ENCODE measurements at regions of chr6 and their contacts with region 1.

Region 1: DNA sequence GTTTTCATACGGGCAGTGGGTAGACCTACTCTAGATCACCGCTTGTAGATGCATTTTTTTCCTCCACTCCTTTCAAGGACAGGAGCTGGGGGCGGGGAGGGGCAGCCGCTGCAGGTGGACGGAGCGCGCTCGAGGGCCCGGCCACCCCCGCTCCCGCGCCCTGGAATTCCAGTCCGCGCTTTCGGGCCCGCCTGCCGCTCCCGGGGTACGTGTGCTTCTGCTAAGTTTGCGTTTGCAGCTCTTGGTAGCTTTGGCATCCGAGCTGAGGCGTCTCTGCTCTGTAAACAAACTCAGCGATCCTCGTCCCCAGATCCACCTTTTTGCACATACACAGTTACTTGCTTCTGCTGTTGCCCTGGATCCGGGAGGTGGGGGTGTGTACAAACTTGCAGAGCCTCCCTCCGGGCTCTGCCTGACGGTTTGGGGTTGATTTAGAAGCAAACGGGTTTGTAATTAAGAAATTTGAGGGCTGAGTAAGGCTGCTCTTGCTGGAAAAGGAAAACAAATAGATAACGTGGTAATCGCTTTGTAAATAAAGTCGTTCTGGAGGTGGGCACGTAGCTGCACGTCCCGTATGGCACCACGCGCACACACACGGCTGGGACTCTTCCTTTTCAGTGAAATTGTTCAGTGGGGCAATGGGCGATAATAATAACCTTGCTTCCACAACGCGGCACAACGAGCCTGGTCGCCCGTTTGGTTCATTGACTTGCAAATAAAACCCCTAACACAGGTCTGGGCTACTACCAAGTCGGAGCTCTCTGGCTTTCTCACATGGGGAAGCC is 976 bp upstream of the CITED2 start:
- DNase-seq: peak; percentile 80
- H3K4me3 Mint-ChIP-seq: peak overlapping the region; percentile 96
- H3K27ac Mint-ChIP-seq: peak overlapping the region; percentile 93
- H3K4me1 Mint-ChIP-seq: peaks cover 31% of the 10 kb centered on the region
- H3K27me3 Mint-ChIP-seq: no peaks in the 10 kb centered on the region

Region 2: DNA sequence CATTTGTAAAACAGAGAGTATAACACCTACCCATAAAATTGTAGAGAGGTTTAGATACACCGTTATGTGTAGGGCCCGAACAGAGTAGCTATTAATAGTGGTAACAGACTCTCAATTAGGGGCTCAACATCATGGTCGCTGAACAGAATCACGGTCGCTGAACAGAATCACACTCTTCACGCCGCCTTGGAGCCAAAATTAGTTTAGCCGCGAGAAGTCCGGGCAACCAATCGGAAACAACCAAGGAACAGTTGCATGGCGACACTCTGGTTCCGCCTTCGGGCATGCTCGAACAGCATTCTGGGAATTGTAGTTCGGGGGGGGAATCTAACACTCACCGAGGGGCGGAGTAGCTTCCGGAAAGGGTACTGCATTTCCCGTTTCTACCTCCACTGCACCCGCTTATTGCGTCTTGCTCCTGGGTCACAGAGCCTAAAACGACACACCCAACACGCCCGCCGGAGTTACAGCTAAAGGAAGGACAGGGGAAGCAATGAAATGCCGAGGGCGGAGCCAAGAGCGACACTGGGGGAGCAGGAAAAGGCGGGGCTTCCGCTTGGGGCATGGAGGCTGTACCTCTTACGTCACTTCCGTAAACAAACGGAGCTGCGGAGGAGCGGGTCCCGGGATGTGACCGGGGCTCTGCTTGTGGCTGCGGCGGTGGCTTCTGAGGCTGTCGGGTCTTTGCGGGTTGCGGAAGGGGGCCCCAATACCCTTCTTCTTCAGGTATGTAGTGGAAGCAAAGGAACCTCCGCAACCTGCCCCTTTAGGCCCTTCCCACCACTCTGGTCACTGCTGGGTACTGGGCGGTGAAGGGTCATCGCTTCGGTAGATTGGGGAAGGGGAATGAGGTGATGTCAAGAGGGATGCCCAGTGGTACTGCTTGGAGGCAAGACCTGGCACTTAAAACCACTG is 602.0 kb before region 1 on chr6 and contains the start of gene CCDC28A:
- CTCF ChIA-PET with region 1: no interaction called
- intact Hi-C with region 1: loop called (anchors 1 kb)
- DNase-seq: peak; percentile 97
- H3K4me3 Mint-ChIP-seq: peak within 1 kb of the TSS; percentile 98
- H3K27ac Mint-ChIP-seq: peak within 1 kb of the TSS; percentile 100
- H3K4me1 Mint-ChIP-seq: peaks cover 30% of the 10 kb centered on the region
- H3K27me3 Mint-ChIP-seq: no peaks in the 10 kb centered on the region
- total RNA-seq, gene CCDC28A: 18.9 to 19.2 TPM

Region 3: DNA sequence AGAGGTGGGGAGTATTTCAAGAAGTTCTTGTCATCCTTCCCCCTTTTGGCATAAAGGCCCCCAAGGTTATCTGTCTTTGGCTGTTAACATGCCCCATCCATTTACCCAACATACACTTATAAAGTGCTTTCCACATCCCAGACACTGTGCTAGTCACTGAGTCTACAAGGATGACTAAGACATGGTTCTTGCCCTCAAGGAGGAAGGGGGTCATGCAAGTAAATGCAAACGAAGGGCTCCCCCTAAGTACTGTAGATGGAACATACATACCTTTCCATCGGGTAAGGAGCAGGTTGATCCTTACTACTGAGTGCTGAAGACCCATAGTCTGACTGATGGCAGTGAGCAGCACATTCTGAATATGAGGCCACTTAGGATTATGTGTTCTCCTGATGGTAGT is 202.3 kb before region 1 on chr6:
- CTCF ChIA-PET with region 1: no interaction called
- intact Hi-C with region 1: loop called (anchors 1 kb)
- DNase-seq: peak; percentile 46
- H3K4me3 Mint-ChIP-seq: no peak overlapping the region
- H3K27ac Mint-ChIP-seq: peak overlapping the region; percentile 85
- H3K4me1 Mint-ChIP-seq: peaks cover 88% of the 10 kb centered on the region
- H3K27me3 Mint-ChIP-seq: no peaks in the 10 kb centered on the region

Region 4: GRCh38 chr6:139600919-139601475 is 225.6 kb after region 1 on chr6:
- CTCF ChIA-PET with region 1: interaction called, 3 read pairs
- intact Hi-C with region 1: loop called (anchors 2 kb)
- DNase-seq: peak; percentile 23
- H3K4me3 Mint-ChIP-seq: no peak overlapping the region
- H3K27ac Mint-ChIP-seq: no peak overlapping the region
- H3K4me1 Mint-ChIP-seq: peaks cover 4% of the 10 kb centered on the region
- H3K27me3 Mint-ChIP-seq: peaks cover 3% of the 10 kb centered on the region

Region 5: DNA sequence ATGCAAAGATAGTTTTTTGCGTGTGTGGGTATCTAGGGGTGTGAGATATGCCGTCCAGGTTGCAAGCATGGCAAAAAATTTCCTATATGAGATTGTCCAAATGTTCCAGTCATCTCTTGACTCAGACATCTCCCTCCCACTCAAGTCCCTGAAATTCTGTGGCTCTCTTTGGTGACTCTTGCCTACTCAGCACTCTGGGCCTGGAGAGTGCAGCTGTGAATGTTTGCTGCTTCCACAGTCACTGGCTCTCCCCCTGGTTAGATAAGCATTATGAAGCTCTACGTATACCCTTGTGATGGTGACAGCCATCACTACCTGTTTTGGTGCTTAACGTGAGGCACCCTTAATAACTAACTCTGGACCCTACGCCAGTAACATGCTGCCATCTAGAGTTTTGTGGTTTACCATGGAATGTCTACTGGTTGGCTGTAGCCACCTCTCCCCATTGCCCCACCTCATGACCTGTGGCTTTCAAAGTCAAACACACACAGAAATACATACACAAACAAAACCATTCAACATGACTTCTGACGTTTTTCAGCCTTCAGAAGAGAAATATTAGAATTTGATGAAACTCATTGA is 620.9 kb after region 1 on chr6:
- CTCF ChIA-PET with region 1: no interaction called
- intact Hi-C with region 1: loop called (anchors 2 kb)
- DNase-seq: peak; percentile 8
- H3K4me3 Mint-ChIP-seq: no peak overlapping the region
- H3K27ac Mint-ChIP-seq: no peak overlapping the region
- H3K4me1 Mint-ChIP-seq: no peaks in the 10 kb centered on the region
- H3K27me3 Mint-ChIP-seq: no peaks in the 10 kb centered on the region

Region 6: DNA sequence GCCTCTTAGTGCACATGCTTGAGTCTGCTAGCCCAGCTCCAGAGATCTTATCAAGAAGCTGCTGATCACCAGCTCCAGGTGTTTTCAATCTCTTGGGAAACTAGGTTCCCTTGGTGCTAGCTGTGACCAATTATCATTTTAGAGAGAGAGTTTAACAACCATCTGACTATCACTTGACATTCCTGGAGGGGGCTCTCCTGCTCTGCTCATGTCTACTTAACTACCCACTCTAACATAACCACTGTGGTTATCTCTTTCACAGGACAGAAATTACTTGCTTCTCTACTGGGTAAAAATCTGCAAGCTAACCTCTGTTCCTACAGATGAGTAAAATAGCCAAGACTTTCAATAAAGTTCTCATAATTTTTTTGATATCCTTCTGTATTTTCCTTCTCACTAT is 1933.9 kb after region 1 on chr6:
- CTCF ChIA-PET with region 1: no interaction called
- intact Hi-C with region 1: loop called (anchors 5 kb)
- DNase-seq: peak; percentile 7
- H3K4me3 Mint-ChIP-seq: no peak overlapping the region
- H3K27ac Mint-ChIP-seq: no peak overlapping the region
- H3K4me1 Mint-ChIP-seq: peaks cover 11% of the 10 kb centered on the region
- H3K27me3 Mint-ChIP-seq: no peaks in the 10 kb centered on the region